Endothelial cell of umbilical vein (primary cell): ENCODE measurements at regions of chr3 and their contacts with region 1.

Region 1: DNA sequence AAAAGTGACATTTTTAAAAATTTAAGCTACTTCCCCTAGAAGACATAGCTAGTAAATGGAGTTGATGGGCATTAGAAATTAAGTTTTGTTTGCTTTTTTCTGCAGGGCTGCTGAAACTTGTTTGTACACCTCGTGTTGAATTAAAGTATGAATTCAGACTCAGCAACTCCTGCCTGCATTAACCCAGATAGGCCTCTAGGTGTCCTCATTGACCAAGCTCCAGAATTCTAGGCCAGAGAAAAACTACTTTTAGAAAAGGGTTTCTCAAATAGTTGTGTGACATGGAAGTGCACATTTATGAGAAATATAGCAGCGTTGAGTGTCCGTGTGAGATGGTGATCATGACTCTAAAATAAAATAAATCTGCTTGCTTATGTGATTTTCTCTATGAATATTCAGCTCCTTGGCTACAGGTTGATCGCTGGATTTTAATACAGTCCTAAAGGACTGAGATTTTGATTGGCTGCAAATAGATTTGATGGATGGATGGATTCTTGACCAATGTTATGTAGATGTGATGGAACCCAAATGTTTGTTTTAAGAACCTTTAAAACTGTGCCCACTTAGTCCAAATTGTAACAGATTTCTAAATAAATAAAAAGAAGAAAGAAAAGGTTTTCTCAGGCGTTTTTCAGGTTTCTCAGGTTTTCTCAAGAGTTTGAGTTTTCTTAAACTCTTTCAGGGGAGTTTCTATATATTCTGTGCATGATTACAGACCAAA is 39.4 kb upstream of the LMOD3 start:
- DNase-seq: peak; percentile 65
- H3K4me3 ChIP-seq: no peak overlapping the region
- H3K27ac ChIP-seq: no peak overlapping the region
- H3K4me1 ChIP-seq: no peaks in the 10 kb centered on the region
- H3K27me3 ChIP-seq: peaks cover 0 to 1% of the 10 kb centered on the region in 2 experiments
- CTCF ChIP-seq: peak; percentile 75
- POLR2A ChIP-seq: no peak

Region 2: GRCh38 chr3:69143605-69144004 is 18.1 kb before region 1 on chr3:
- CTCF ChIA-PET with region 1: interaction called, 12 read pairs
- POLR2A ChIA-PET with region 1: no interaction called
- dilution Hi-C with region 1: no loop called
- intact Hi-C with region 1: no loop called
- DNase-seq: no peak
- H3K4me3 ChIP-seq: no peak overlapping the region
- H3K27ac ChIP-seq: no peak overlapping the region
- H3K4me1 ChIP-seq: no peaks in the 10 kb centered on the region
- H3K27me3 ChIP-seq: no peaks in the 10 kb centered on the region
- CTCF ChIP-seq: no peak
- POLR2A ChIP-seq: no peak

Region 3: DNA sequence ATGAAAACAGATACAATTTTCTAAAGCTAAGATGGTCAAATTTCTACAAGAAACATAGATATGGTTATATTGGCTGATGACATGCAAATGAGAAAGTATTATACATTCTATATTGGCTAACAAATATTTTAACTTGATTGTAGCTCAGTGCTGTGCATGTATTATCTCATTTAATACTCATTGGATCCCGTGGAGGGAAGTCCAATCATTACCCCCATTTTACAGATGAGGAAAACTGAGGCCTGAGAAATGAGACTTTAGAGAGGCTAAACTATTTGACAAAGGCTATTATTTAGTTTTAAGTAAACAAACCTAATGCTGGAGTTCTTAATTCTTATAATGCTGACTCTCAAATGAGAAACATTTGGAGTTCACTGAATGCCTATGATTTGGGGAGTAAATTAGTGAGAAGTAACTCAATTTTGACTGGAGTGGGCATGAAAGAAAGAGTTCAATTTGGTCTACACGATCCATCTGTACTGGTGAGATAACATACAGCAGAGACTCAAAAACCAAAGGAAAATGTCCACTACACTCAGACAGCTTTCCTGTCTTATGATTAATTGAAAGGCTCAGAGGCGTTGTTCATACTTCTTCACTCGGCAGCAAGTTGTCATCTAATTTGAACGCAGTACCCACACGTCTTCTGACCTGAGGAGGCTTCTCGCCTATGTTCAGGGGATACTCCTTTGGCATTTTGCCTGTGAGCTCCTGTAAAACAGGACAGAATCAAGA is 32.9 kb after region 1 on chr3:
- CTCF ChIA-PET with region 1: interaction called, 17 read pairs
- POLR2A ChIA-PET with region 1: no interaction called
- dilution Hi-C with region 1: no loop called
- intact Hi-C with region 1: no loop called
- DNase-seq: peak; percentile 79
- H3K4me3 ChIP-seq: no peak overlapping the region
- H3K27ac ChIP-seq: peak overlapping the region; percentile 32
- H3K4me1 ChIP-seq: peaks cover 37% of the 10 kb centered on the region
- H3K27me3 ChIP-seq: no peaks in the 10 kb centered on the region
- CTCF ChIP-seq: no peak
- POLR2A ChIP-seq: no peak

Region 4: GRCh38 chr3:69288161-69288895 is 126.6 kb after region 1 on chr3:
- CTCF ChIA-PET with region 1: interaction called, 20 read pairs
- POLR2A ChIA-PET with region 1: no interaction called
- dilution Hi-C with region 1: no loop called
- intact Hi-C with region 1: loop called (anchors 5 kb)
- DNase-seq: peak; percentile 21
- H3K4me3 ChIP-seq: no peak overlapping the region
- H3K27ac ChIP-seq: peak overlapping the region; percentile 56
- H3K4me1 ChIP-seq: peaks cover 32% of the 10 kb centered on the region
- H3K27me3 ChIP-seq: no peaks in the 10 kb centered on the region
- CTCF ChIP-seq: no peak
- POLR2A ChIP-seq: no peak

Region 5: GRCh38 chr3:69425261-69425660 is 263.5 kb after region 1 on chr3:
- CTCF ChIA-PET with region 1: interaction called, 111 read pairs
- POLR2A ChIA-PET with region 1: no interaction called
- dilution Hi-C with region 1: loop called (anchors 25 kb)
- intact Hi-C with region 1: loop called (anchors 1 kb)
- DNase-seq: peak; percentile 69
- H3K4me3 ChIP-seq: no peak overlapping the region
- H3K27ac ChIP-seq: no peak overlapping the region
- H3K4me1 ChIP-seq: peaks cover 15% of the 10 kb centered on the region
- H3K27me3 ChIP-seq: no peaks in the 10 kb centered on the region
- CTCF ChIP-seq: peak; percentile 71 to 74
- POLR2A ChIP-seq: no peak